ENCODE measurements at regions of chr11 and their contacts with region 1.

Region 1: DNA sequence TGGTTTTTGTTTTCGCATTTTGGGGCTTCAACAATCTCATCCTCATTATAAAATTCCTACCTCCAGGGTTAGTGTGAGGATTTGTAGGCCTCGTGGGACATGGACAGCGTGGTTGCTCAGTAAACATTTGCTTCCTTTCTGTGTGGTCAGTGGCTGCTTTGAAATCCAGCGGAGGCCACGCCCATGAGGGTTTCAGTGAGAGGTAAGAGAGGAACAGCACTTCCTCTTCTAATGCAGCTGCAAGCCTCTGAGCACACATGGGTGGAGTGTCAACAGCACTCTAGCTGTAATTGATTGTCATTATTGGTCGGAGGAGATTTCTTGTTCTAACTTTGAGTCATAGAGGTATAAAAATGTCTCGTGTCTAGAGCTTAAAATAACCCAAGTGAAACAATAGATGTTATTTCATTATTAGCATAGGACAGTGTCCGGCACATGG is 6.0 kb upstream of the ARHGAP42 start:
- DNase-seq: peak; percentile 63
- ATAC-seq: peak; percentile 69

Region 2: GRCh38 chr11:100581318-100581717 is 99.8 kb before region 1 on chr11:
- intact Hi-C with region 1: loop called (anchors 10 kb)
- DNase-seq: no peak
- ATAC-seq: peak; percentile 40

Region 3: GRCh38 chr11:100761841-100762240 is 80.8 kb after region 1 on chr11:
- intact Hi-C with region 1: loop called (anchors 2 kb)
- DNase-seq: no peak
- ATAC-seq: no peak

Region 4: GRCh38 chr11:100855466-100856067 is 174.5 kb after region 1 on chr11:
- intact Hi-C with region 1: loop called (anchors 2 kb)
- DNase-seq: no peak
- ATAC-seq: no peak

Region 5: GRCh38 chr11:100930185-100930778 is 249.2 kb after region 1 on chr11:
- intact Hi-C with region 1: loop called (anchors 5 kb)
- DNase-seq: no peak
- ATAC-seq: peak; percentile 48